ENCODE measurements at regions of chr15 and their contacts with region 1.

Region 1: DNA sequence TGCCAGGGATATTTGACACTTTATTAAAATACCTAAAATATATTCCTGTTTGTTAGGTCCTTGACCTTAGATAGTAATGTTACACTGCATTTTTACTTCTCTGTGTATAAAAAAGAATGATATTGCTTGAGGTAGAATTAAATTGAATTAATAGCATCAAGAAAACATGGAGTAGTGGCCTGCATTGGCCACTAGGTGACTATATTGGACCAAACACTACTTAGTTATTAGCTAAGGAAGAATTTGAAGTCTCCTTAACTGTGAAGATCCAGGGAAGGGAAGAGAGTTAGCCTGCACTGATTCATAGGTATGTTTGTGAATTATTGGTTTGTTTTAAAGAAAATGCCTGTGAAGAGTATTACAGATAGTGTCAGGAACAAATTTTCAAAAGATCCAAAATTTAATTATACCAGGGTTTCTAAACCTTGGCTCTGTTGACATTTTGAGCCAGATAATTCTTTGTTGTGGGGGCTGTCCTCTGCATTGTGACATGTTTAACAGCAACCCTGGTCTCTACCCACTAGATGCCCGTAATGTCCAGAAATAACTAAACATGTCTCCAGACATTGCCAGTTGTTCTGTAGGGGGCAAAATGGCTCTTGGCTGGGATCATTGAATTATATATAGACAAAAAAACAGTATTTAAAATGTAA is 103.6 kb upstream of the THSD4 start:
- H3K4me3 ChIP-seq: no peak overlapping the region
- H3K27ac ChIP-seq: no peak overlapping the region
- H3K4me1 ChIP-seq: no peaks in the 10 kb centered on the region
- CTCF ChIP-seq: peak; percentile 62; the same call in 1 of the 2 replicates

Region 2: GRCh38 chr15:71069682-71070081 is 58.1 kb after region 1 on chr15:
- CTCF ChIA-PET with region 1: no interaction called
- POLR2A ChIA-PET with region 1: no interaction called
- H3K4me3 ChIP-seq: no peak overlapping the region
- H3K27ac ChIP-seq: no peak overlapping the region
- H3K4me1 ChIP-seq: no peaks in the 10 kb centered on the region
- CTCF ChIP-seq: no peak

Region 3: GRCh38 chr15:71096644-71097043 is 85.0 kb after region 1 on chr15:
- CTCF ChIA-PET with region 1: no interaction called
- POLR2A ChIA-PET with region 1: no interaction called
- H3K4me3 ChIP-seq: no peak overlapping the region
- H3K27ac ChIP-seq: no peak overlapping the region
- H3K4me1 ChIP-seq: no peaks in the 10 kb centered on the region
- CTCF ChIP-seq: no peak

Region 4: DNA sequence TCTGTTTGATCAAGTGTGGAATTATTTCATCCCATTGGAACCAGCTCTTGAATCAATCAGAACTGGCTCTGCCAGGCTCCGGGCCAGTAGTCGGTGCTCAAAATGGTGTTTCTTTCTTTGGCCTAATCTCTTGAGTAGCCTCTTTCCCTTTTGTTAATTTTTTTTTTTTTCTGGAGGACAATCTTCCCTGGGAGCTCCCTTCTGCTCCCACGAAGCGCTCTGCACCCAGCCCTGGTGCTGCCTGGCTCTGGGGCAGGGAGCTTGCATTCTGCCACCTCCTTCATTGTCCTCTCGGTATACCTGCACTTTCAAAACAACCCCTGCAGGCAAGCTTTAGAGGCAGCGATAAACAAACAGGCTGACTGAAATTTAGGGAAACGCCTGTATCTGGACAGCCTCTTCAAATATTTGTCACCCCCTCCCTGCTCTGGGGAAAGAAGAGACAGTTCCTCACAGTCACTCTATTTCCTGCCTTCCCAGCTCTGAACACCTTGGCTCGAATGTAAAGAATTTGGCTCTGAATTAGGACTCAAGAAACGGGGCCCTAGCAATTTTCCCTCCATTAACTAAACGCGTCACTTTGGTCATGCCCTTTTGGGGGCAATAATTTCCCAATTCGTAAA is 102.5 kb after region 1 on chr15:
- CTCF ChIA-PET with region 1: interaction called, 10 read pairs
- POLR2A ChIA-PET with region 1: no interaction called
- H3K4me3 ChIP-seq: no peak overlapping the region
- H3K27ac ChIP-seq: no peak overlapping the region
- H3K4me1 ChIP-seq: peaks cover 2% of the 10 kb centered on the region; the same call in 1 of the 2 replicates
- CTCF ChIP-seq: no peak

Region 5: GRCh38 chr15:71443538-71443937 is 431.9 kb after region 1 on chr15:
- CTCF ChIA-PET with region 1: interaction called, 26 read pairs
- POLR2A ChIA-PET with region 1: no interaction called
- H3K4me3 ChIP-seq: no peak overlapping the region
- H3K27ac ChIP-seq: no peak overlapping the region
- H3K4me1 ChIP-seq: peaks cover 13% of the 10 kb centered on the region
- CTCF ChIP-seq: no peak

Measured in HEK293 (cell line).